ENCODE measurements at regions of chr4 and their contacts with region 1.

Region 1: GRCh38 chr4:7673121-7673520 is 238.4 kb upstream of the PSAPL1 start:
- DNase-seq: no peak
- ATAC-seq: no peak
- H3K4me3 Mint-ChIP-seq: no peak overlapping the region
- H3K27ac Mint-ChIP-seq: no peak overlapping the region
- H3K4me1 Mint-ChIP-seq: no peaks in the 10 kb centered on the region; the same call in 1 of the 2 replicates
- H3K27me3 Mint-ChIP-seq: no peaks in the 10 kb centered on the region
- CTCF ChIP-seq: no peak

Region 2: GRCh38 chr4:7618361-7618760 is 54.8 kb before region 1 on chr4:
- CTCF ChIA-PET with region 1: no interaction called
- POLR2A ChIA-PET with region 1: interaction called, 12 read pairs
- DNase-seq: no peak
- ATAC-seq: no peak
- H3K4me3 Mint-ChIP-seq: no peak overlapping the region
- H3K27ac Mint-ChIP-seq: no peak overlapping the region
- H3K4me1 Mint-ChIP-seq: no peaks in the 10 kb centered on the region
- H3K27me3 Mint-ChIP-seq: no peaks in the 10 kb centered on the region
- CTCF ChIP-seq: no peak

Region 3: GRCh38 chr4:7876201-7876875 is 203.2 kb after region 1 on chr4:
- CTCF ChIA-PET with region 1: no interaction called
- POLR2A ChIA-PET with region 1: no interaction called
- DNase-seq: peak; percentile 54
- ATAC-seq: peak; percentile 98
- H3K4me3 Mint-ChIP-seq: no peak overlapping the region
- H3K27ac Mint-ChIP-seq: peak overlapping the region; percentile 6; the same call in 1 of the 2 replicates
- H3K4me1 Mint-ChIP-seq: peaks cover 54% of the 10 kb centered on the region
- H3K27me3 Mint-ChIP-seq: no peaks in the 10 kb centered on the region
- CTCF ChIP-seq: no peak

Measured in WTC11 (cell line).